Posterior cingulate gyrus (tissue), 11 donors: ENCODE measurements at regions of chr12 and their contacts with region 1.

Region 1: DNA sequence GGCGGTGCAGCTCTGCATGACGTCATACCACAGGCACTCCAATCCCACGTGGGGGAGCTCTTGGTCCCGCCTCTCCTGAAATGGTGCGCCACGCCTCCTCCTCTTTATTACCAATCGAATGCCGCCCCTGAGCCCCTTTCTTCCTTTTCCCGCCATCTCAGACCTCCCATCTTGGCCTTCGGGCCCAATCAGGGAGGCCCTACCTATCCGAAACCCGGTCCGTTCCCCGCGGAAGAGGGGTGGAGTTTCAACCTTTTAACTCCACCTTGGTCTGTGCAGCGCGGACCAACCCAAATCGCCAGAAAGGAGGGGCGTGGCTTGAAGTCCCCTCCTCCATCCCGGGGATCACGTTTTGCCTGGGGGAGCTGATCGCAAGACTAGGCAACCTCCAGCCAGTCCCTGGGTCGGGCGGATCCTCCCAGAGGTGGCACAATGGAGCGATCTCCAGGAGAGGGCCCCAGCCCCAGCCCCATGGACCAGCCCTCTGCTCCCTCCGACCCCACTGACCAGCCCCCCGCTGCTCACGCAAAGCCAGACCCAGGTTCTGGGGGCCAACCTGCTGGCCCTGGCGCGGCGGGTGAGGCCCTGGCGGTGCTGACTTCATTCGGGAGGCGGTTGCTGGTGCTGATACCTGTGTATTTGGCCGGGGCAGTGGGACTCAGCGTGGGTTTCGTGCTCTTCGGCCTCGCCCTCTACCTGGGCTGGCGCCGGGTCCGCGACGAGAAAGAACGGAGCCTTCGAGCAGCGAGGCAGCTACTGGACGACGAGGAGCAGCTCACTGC is at the start of gene ESYT1:
- DNase-seq: peak; percentile 86 to 99 (median 96)

Region 2: DNA sequence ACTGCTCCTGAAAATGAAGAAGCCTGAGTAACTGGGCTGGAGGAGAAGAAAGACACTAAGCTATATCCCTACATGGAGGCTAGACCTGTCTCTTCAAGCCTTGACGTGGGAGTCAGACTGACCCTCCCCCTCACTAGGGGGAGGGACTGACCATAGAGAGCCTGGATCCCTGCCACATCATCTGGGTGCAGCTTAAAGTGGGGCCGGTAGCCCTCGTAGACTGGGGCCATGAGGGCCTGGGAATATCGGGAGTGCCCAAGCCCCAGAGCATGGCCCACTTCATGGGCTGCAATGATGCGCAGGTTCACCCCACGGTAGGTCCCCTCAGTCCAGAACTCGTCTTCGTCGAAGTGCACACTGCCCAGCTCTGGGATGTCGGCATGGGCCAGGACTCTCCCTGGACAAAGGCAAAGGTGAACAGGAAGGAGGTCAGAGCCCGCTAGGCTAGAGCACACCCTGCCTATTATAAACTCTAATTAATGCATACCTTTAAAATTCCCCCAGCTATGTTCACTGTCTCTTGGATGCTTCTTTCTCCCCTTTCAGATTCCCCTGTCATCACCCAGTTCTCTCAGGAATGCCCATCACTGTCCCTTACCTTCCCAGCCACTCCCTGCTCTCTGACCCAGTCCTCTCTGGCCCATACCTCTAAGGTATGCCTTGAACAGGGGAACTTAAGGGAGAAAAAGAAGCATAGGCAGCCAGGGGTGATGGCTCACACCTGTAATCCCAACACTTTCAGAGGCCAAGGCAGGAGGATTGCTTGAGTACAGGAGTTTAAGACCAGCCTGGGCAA is 288.5 kb before region 1 on chr12:
- intact Hi-C with region 1: loop called (anchors 5 kb)
- DNase-seq: no peak

Region 3: DNA sequence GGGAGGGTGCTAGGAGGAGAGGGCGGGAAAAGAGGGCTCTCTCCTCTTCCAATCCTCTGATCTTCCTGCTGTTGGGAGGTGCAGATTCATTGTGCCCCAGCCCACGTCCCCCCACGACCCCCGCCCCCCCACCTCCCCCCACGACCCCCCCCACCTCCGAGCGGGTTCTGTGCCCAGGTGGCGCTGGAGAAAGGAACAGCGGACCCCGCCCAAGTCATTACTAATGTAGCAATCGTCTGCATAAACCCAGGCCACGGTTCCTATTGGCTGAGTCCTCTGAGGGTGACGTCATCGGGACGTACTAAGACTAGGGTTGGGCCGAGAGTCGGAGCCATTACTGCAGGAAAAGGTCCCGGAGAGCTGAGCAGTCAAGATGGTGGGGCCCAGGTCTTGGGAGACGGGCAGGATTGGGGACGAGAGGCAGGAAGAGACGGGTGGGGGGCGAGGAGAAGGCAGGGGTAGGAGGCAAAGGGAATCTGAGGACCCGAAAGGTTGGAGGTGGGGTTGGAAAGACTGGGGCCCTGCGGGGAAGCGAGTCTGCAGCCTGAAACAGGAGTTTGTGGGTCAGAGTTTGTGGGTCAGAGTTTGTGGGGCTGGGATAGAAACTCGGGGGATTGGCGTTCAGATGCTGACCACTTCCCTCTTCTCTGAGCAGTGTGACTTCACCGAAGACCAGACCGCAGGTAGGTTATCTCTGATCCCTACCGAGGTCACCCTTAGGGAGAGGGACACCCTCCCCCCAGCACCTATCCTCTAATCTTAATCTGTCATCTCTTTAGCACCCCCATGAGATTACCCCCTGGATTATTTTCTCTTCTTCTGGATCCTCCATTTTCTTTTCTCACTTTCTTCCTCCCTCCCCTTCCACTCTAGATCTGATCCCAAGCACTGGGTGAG is 30.2 kb after region 1 on chr12 and contains the start of gene MYL6:
- intact Hi-C with region 1: loop called (anchors 2 kb)
- DNase-seq: peak; percentile 93 to 99 (median 96)

Region 4: GRCh38 chr12:56468216-56469006 is 340.3 kb after region 1 on chr12 and contains the start of gene SPRYD4:
- intact Hi-C with region 1: loop called (anchors 10 kb)
- DNase-seq: peak; percentile 90 to 99 (median 94)